ENCODE measurements at regions of chr11 and their contacts with region 1.

Region 1: DNA sequence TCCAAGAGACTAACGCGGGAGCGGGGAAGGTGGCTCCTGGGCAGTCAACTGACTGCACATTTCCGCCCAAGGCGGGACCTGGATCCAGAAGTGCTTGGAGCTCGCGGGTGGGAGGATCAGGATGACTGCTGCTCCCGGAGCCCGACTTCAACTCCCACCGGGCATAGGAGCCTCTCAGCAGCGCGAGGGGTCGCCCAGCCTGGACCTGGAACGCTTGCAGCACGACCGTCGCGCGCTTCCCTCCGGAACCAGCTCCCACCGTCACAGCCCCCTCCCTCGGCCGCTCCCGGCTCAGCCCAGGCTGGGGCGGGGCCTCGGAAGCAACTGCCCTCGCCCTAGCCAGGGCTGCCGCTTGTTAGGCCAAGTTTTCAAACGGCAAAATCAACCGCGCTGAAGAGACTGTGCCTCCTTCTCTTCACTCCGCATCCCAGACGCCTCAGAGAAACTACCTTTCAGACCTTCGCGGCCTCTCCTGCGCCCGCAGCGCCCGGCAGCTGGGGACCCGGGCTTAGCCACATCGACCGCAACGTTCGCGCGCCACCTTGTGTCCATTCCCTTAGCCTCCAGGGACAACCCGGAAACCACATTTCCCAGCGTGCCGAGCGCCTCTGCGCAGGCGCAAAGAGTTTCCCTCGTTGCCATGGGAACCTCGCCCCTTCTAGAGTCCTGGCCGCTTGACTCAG is 14.0 kb downstream of the SSH3 start:
- DNase-seq: peak; percentile 99
- H3K4me3 Mint-ChIP-seq: peak overlapping the region; percentile 92
- H3K27ac Mint-ChIP-seq: peak overlapping the region; percentile 97
- H3K4me1 Mint-ChIP-seq: peaks cover 23% of the 10 kb centered on the region
- H3K27me3 Mint-ChIP-seq: no peaks in the 10 kb centered on the region

Region 2: GRCh38 chr11:66958232-66958955 is 359.0 kb before region 1 on chr11 and contains the start of gene PC:
- CTCF ChIA-PET with region 1: no interaction called
- intact Hi-C with region 1: loop called (anchors 5 kb)
- DNase-seq: peak; percentile 99
- H3K4me3 Mint-ChIP-seq: peak within 1 kb of the TSS; percentile 83
- H3K27ac Mint-ChIP-seq: peak within 1 kb of the TSS; percentile 17
- H3K4me1 Mint-ChIP-seq: peaks cover 16% of the 10 kb centered on the region
- H3K27me3 Mint-ChIP-seq: no peaks in the 10 kb centered on the region
- total RNA-seq, gene PC: 8.0 to 9.4 TPM

Region 3: DNA sequence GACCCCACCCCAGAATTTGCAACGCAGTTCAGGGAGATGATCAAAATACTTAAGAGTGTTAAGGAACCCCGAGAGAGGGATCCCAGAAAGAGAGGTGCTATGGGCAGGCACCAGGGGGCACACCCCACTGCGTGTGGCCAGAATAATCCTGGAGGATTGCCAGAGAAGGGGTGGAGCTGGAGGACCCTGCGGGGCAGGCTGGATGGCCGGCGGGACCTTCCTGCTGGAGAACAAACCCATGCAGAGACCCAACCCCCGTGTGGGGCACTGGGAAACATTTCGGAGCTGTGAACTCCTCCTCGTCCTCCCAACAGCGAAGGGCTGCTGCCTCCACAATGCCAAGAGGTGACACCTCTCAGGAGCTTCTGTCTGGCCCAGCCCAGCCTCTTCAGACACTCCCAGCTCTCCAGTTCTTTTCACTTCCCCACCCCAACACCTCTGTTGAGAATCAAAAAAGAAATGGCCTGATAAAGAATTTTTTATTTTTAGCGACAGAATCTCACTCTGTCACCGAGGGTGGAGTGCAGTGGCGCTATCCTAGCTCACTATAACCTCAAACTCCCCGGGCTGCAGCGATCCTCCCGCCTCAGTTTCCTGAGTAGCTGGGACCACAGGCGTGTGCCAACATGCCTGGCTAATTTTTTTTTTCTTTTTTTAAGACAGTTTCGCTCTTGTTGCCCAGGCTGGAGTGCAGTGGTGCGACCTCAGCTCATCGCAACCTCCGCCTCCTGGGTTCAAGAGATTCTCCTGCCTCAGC is 235.1 kb before region 1 on chr11:
- CTCF ChIA-PET with region 1: interaction called, 5 read pairs
- intact Hi-C with region 1: loop called (anchors 1 kb)
- DNase-seq: peak; percentile 41
- H3K4me3 Mint-ChIP-seq: peak overlapping the region; percentile 47
- H3K27ac Mint-ChIP-seq: no peak overlapping the region
- H3K4me1 Mint-ChIP-seq: peaks cover 19% of the 10 kb centered on the region
- H3K27me3 Mint-ChIP-seq: peaks cover 4% of the 10 kb centered on the region

Region 4: DNA sequence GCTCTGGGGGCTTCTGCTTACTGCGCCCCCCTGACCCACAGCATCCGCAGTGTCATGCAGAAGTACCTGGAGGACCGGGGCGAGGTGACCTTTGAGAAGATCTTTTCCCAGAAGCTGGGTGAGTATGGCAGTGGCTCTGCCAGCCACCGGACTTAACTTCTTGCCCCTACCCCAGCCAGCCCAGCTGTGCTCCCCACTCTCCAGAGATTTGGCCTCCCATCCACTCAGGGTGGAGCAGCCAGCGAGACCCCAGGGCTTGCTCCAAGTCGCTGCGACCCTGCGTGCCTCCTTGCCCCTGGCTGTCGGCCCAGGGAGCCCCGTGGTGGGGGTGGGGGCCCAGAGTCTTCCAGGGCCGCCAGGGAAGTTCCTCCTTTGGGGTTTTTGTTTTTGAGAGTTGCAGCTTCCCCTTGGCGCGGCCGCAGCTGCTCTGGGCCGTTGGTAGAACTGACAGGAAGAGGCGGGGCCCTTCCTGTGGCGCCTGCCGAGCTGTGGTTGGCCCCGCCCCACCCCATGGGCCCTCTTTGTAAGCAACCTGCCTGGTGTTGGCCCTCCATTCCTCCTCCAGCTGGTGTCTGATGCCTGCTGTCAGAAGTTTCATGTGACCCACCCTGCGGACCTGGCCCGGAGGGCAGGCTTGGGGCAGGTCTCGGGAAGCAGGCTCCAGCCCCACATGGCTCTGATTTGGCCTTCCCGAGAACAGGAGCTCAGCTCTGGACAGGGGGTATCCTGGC is 40.0 kb before region 1 on chr11:
- CTCF ChIA-PET with region 1: interaction called, 10 read pairs
- intact Hi-C with region 1: loop called (anchors 1 kb)
- DNase-seq: peak; percentile 95
- H3K4me3 Mint-ChIP-seq: peak overlapping the region; percentile 73
- H3K27ac Mint-ChIP-seq: peak overlapping the region; percentile 99
- H3K4me1 Mint-ChIP-seq: peaks cover 69% of the 10 kb centered on the region
- H3K27me3 Mint-ChIP-seq: no peaks in the 10 kb centered on the region

Region 5: GRCh38 chr11:67345920-67346799 is 28.8 kb after region 1 on chr11:
- CTCF ChIA-PET with region 1: interaction called, 32 read pairs
- intact Hi-C with region 1: loop called (anchors 2 kb)
- DNase-seq: peak; percentile 59
- H3K4me3 Mint-ChIP-seq: no peak overlapping the region
- H3K27ac Mint-ChIP-seq: peak overlapping the region; percentile 90
- H3K4me1 Mint-ChIP-seq: peaks cover 60% of the 10 kb centered on the region
- H3K27me3 Mint-ChIP-seq: no peaks in the 10 kb centered on the region

Region 6: GRCh38 chr11:67382276-67383136 is 65.2 kb after region 1 on chr11:
- CTCF ChIA-PET with region 1: interaction called, 43 read pairs
- intact Hi-C with region 1: loop called (anchors 2 kb)
- DNase-seq: peak; percentile 92
- H3K4me3 Mint-ChIP-seq: no peak overlapping the region
- H3K27ac Mint-ChIP-seq: no peak overlapping the region
- H3K4me1 Mint-ChIP-seq: peaks cover 2% of the 10 kb centered on the region
- H3K27me3 Mint-ChIP-seq: peaks cover 2% of the 10 kb centered on the region